ENCODE measurements at regions of chr6 and their contacts with region 1.

Region 1: GRCh38 chr6:42547407-42548329 is 16.2 kb upstream of the UBR2 start:
- DNase-seq: peak; percentile 48
- ATAC-seq: peak; percentile 99
- H3K4me3 ChIP-seq: peak overlapping the region; percentile 41 to 61 (median 41)
- H3K27ac ChIP-seq: no peak overlapping the region
- H3K4me1 ChIP-seq: peaks cover 18% of the 10 kb centered on the region
- H3K27me3 ChIP-seq: no peaks in the 10 kb centered on the region
- CTCF ChIP-seq: peak; percentile 98
- EP300 ChIP-seq: no peak
- POLR2A ChIP-seq: no peak
- RAD21 ChIP-seq: peak; percentile 92

Region 2: GRCh38 chr6:42260972-42261371 is 286.7 kb before region 1 on chr6:
- CTCF ChIA-PET with region 1: no interaction called
- POLR2A ChIA-PET with region 1: no interaction called
- in situ Hi-C with region 1: loop called (anchors 5 kb)
- intact Hi-C with region 1: no loop called
- DNase-seq: no peak
- ATAC-seq: peak; percentile 85
- H3K4me3 ChIP-seq: peak overlapping the region in 1 of 3 experiments; percentile 49; a peak in 1 of 6 replicates
- H3K27ac ChIP-seq: no peak overlapping the region
- H3K4me1 ChIP-seq: peaks cover 8% of the 10 kb centered on the region; the same call in 1 of the 2 replicates
- H3K27me3 ChIP-seq: peaks cover 4 to 21% of the 10 kb centered on the region in 2 experiments; a peak in 3 of 5 replicates
- CTCF ChIP-seq: peak; percentile 56
- EP300 ChIP-seq: no peak
- POLR2A ChIP-seq: no peak
- RAD21 ChIP-seq: no peak

Region 3: GRCh38 chr6:42306439-42307140 is 241.1 kb before region 1 on chr6:
- CTCF ChIA-PET with region 1: interaction called, 17 read pairs
- POLR2A ChIA-PET with region 1: no interaction called
- in situ Hi-C with region 1: loop called (anchors 5 kb)
- intact Hi-C with region 1: loop called (anchors 1 kb)
- DNase-seq: no peak
- ATAC-seq: no peak
- H3K4me3 ChIP-seq: no peak overlapping the region
- H3K27ac ChIP-seq: no peak overlapping the region
- H3K4me1 ChIP-seq: no peaks in the 10 kb centered on the region
- H3K27me3 ChIP-seq: peaks cover 3 to 21% of the 10 kb centered on the region in 2 experiments; a peak in 2 of 5 replicates
- CTCF ChIP-seq: no peak
- EP300 ChIP-seq: no peak
- POLR2A ChIP-seq: no peak
- RAD21 ChIP-seq: no peak

Region 4: GRCh38 chr6:42313941-42314570 is 233.6 kb before region 1 on chr6:
- CTCF ChIA-PET with region 1: interaction called, 17 read pairs
- POLR2A ChIA-PET with region 1: no interaction called
- in situ Hi-C with region 1: loop called (anchors 5 kb)
- intact Hi-C with region 1: loop called (anchors 1 kb)
- DNase-seq: no peak
- ATAC-seq: no peak
- H3K4me3 ChIP-seq: no peak overlapping the region
- H3K27ac ChIP-seq: no peak overlapping the region
- H3K4me1 ChIP-seq: peaks cover 13% of the 10 kb centered on the region; the same call in 1 of the 2 replicates
- H3K27me3 ChIP-seq: peaks cover 4 to 29% of the 10 kb centered on the region in 2 experiments; a peak in 4 of 5 replicates
- CTCF ChIP-seq: no peak
- EP300 ChIP-seq: no peak
- POLR2A ChIP-seq: no peak
- RAD21 ChIP-seq: no peak

Region 5: GRCh38 chr6:42471142-42471541 is 76.5 kb before region 1 on chr6:
- CTCF ChIA-PET with region 1: no interaction called
- POLR2A ChIA-PET with region 1: no interaction called
- in situ Hi-C with region 1: no loop called
- intact Hi-C with region 1: no loop called
- DNase-seq: no peak
- ATAC-seq: no peak
- H3K4me3 ChIP-seq: no peak overlapping the region
- H3K27ac ChIP-seq: no peak overlapping the region
- H3K4me1 ChIP-seq: peaks cover 9% of the 10 kb centered on the region
- H3K27me3 ChIP-seq: no peaks in the 10 kb centered on the region; a peak in 1 of 5 replicates
- CTCF ChIP-seq: no peak
- EP300 ChIP-seq: no peak
- POLR2A ChIP-seq: no peak
- RAD21 ChIP-seq: no peak

Region 6: GRCh38 chr6:42563697-42564505 is 16.2 kb after region 1 on chr6 and contains the start of gene UBR2:
- CTCF ChIA-PET with region 1: no interaction called
- POLR2A ChIA-PET with region 1: interaction called, 23 read pairs
- in situ Hi-C with region 1: no loop called
- intact Hi-C with region 1: no loop called
- DNase-seq: peak; percentile 99
- ATAC-seq: peak; percentile 98
- H3K4me3 ChIP-seq: peak within 1 kb of the TSS; percentile 95 to 99 (median 96)
- H3K27ac ChIP-seq: peak within 1 kb of the TSS; percentile 93
- H3K4me1 ChIP-seq: peaks cover 31% of the 10 kb centered on the region
- H3K27me3 ChIP-seq: peaks cover 0 to 5% of the 10 kb centered on the region in 2 experiments; a peak in 1 of 5 replicates
- CTCF ChIP-seq: peak; percentile 82
- EP300 ChIP-seq: peak in 1 of 2 experiments; percentile 62; a peak in 2 of 4 replicates
- POLR2A ChIP-seq: peak; percentile 96 to 98
- RAD21 ChIP-seq: peak; percentile 40; the same call in 1 of the 2 replicates
- total RNA-seq, gene UBR2: 29.3 and 39.3 TPM in 2 replicates

Region 7: DNA sequence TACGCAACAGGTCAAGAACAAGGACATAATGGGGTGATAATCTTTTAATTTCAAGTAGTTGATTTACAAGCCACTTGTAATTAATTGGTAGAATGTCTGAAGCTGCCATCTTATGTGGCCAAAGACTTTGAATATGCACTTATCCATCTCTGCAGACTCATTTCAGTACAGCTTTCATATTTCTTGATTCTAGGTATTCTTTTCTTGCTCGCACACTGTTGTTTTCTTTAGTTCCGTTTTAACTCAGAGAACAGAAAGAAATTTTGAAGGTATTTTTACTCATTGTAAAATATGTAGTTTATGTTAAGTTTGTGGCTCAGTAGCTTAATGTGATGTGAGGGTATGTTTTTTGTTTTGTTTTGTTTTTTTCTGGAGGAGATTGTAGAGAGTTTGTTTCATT is 90.0 kb after region 1 on chr6:
- CTCF ChIA-PET with region 1: no interaction called
- POLR2A ChIA-PET with region 1: no interaction called
- in situ Hi-C with region 1: no loop called
- intact Hi-C with region 1: no loop called
- DNase-seq: no peak
- ATAC-seq: no peak
- H3K4me3 ChIP-seq: no peak overlapping the region
- H3K27ac ChIP-seq: no peak overlapping the region
- H3K4me1 ChIP-seq: no peaks in the 10 kb centered on the region
- H3K27me3 ChIP-seq: no peaks in the 10 kb centered on the region; a peak in 1 of 5 replicates
- CTCF ChIP-seq: no peak
- EP300 ChIP-seq: no peak
- POLR2A ChIP-seq: no peak
- RAD21 ChIP-seq: no peak

Measured in HepG2 (cell line).